Panc1 (cell line): ENCODE measurements at regions of chr18 and their contacts with region 1.

Region 1: GRCh38 chr18:23099621-23100020 is 35.7 kb upstream of the CABLES1 start:
- DNase-seq: peak; percentile 85
- ATAC-seq: peak; percentile 89
- H3K4me3 ChIP-seq: no peak overlapping the region
- H3K27ac ChIP-seq: peak overlapping the region; percentile 82
- H3K4me1 ChIP-seq: peaks cover 32% of the 10 kb centered on the region
- H3K27me3 ChIP-seq: no peaks in the 10 kb centered on the region
- CTCF ChIP-seq: no peak

Region 2: DNA sequence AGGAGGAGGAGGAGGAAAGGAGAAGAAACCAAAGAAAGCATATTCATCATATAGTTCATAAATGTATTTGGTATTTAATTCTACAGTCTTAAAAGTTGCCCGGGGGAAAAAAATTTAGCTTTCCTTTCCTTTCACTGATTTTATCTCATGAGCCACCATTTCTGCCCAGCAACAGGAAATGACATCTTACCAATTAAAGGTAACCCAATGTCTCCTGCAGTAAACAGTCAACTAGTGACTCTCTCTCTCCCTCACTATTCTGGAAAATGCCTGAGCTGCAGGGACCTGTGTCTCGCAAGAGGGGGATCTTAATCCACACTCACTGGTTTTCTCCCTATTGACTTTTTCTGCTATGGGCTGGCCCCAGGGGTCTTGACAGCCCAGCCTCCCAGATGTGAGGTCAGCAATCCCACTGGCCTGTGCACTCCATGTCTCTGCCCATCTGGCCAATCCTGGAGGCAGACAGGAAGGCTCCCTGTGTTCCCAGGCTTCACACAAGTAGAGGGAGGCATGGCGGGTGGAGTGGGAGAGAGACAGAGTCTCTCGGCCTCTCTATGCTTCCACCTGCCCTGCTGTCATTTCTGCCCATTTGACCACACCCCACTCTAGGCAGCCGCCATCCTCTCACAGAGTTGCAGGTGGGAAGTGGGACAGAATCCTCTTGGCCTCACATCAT is 49.8 kb before region 1 on chr18:
- CTCF ChIA-PET with region 1: no interaction called
- POLR2A ChIA-PET with region 1: no interaction called
- in situ Hi-C with region 1: no loop called
- intact Hi-C with region 1: loop called (anchors 10 kb)
- DNase-seq: no peak
- ATAC-seq: no peak
- H3K4me3 ChIP-seq: no peak overlapping the region
- H3K27ac ChIP-seq: no peak overlapping the region
- H3K4me1 ChIP-seq: peaks cover 10% of the 10 kb centered on the region
- H3K27me3 ChIP-seq: no peaks in the 10 kb centered on the region
- CTCF ChIP-seq: no peak